Left cardiac atrium (tissue), 4 donors: ENCODE measurements at regions of chr14 and their contacts with region 1.

Region 1: DNA sequence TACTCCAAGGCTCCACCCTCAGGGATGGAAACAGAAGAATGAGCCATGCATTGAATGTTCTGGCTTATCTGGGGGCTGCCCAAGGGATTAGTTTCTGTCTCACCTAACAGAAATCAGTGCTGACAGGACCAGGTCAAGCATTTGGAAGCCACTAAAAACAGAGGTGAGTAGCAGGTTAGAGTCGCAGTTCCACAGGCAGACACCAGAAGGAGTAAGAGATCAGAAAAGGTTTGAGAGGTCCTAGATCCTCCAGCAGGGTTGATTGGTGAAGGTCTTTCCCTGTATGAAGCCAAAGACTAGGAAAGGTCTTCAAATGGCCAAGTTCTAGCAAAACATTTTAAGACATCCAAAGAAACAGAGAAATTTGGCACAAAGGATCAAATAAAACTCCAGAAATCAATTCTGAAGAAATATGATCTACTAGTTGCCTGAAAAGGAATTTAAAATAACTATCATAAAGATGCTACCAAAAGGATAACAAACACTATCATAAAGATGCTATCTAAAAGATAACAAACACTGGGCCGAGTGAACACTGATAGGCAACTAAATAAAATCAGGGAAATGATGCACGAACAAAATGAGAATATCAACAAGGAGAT is 19.5 kb upstream of the TTC9 start:
- DNase-seq: peak; percentile 21
- ATAC-seq: peak; percentile 70 to 75

Region 2: DNA sequence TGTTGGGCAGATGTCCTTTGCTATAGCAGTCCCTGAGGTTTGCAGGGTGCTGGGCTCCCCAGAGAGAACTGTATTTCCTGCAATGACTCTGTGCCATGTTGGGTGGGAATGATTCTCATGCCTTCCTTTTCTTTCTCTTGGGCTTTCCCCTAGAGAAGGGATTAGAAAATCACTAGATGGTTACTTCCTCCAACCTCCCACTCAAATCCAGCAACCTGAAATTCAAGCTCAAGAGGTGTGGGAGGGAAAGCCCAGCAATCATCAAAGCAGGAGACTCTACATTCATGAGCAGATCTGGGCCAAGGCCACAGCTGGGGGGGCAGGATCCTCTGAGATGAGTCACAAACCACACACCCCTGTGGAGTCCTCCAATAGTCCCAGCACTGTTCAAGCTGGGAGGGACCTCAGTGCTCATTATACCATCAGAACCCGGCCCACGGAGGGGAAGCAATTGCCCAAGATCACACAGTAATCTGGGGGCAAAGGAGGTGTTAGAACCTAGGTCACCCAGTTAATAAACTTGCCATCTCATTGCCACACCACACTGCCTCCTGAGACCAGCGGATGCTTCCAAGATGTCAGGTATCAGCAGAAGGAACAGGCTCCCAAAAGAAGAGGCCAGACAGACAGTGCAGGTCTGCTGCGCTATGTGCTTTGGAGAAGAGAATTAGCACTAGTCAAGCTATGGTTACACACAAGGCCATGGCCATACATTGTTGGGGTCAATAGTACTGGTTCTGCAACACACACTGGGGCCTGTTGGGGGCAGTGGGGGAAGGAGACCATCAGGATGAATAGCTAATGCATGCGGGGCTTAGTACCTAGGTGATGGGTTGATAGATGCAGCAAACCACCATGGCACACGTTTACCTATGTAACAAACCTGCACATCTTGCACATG is 85.2 kb after region 1 on chr14:
- intact Hi-C with region 1: loop called (anchors 2 to 5 kb)
- DNase-seq: no peak
- ATAC-seq: peak in 1 of 2 donors; percentile 70

Region 3: DNA sequence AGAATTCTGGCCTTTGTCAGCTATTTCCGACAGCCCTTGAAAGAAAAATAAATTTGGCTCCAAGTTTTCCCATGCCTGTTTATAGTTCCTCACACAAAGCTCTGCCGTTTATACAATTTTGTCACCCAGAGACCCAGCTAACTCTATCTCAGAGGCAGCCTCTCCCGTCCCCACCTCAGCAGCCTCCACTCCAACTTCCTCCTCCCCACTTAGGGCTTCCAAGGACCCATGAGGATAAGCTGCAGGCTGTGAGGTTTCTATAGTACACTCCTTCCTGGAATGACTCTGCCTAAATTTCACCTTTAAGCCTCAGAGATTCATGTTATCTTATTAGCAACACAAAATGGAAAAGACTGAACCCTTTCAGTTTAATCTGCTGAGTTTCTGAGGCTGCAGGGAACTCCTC is 91.3 kb after region 1 on chr14:
- intact Hi-C with region 1: loop called (anchors 2 to 5 kb)
- DNase-seq: no peak
- ATAC-seq: peak; percentile 15 to 59

Region 4: GRCh38 chr14:70809543-70810244 is 187.5 kb after region 1 on chr14:
- intact Hi-C with region 1: loop called in 1 of 2 experiments (anchors 10 kb)
- DNase-seq: peak; percentile 89
- ATAC-seq: peak; percentile 93 to 97

Region 5: GRCh38 chr14:70816525-70816924 is 194.3 kb after region 1 on chr14:
- intact Hi-C with region 1: loop called (anchors 5 to 10 kb)
- DNase-seq: no peak
- ATAC-seq: no peak